Sigmoid colon (tissue), 7 donors: ENCODE measurements at regions of chr16 and their contacts with region 1.

Region 1: DNA sequence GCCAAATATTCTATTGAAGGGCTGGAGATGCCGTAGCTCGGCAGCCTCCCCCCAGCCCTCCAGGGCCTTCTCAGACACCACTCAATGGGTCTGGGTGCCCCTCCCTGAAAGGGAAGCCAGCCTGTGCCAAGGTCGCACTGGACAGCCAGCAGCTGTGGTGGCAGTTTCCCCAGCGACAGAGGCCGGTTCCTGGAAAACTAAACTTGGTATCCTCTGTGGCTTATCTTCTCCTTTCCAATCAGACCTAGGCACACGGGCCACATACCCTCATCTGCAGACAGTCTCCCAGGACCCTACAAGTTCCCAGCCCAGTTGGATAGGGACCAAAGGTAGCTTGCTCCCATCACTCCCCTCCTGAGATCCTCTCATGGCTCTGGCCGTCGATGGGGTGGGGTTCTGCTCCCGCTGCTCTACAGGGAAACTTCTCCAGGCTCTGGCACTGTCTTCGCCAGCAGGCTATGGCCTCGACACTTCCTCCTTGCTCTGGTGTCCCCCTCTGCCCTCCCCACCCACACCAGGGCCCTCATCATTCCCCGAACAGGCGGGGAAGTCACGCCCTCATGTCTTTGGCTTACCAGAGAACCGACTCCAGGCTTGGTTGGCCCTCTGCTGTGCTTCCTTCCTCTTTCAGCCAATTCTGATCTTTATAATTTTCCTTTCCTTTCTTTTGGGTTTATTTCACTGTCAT is 18.3 kb upstream of the IL21R start:
- DNase-seq: peak; percentile 71
- H3K4me3 ChIP-seq: no peak overlapping the region
- H3K27ac ChIP-seq: peak overlapping the region in 1 of 4 donors; percentile 8
- H3K4me1 ChIP-seq: no peaks in the 10 kb centered on the region
- H3K27me3 ChIP-seq: no peaks in the 10 kb centered on the region
- CTCF ChIP-seq: no peak
- EP300 ChIP-seq: no peak
- POLR2A ChIP-seq: no peak

Region 2: DNA sequence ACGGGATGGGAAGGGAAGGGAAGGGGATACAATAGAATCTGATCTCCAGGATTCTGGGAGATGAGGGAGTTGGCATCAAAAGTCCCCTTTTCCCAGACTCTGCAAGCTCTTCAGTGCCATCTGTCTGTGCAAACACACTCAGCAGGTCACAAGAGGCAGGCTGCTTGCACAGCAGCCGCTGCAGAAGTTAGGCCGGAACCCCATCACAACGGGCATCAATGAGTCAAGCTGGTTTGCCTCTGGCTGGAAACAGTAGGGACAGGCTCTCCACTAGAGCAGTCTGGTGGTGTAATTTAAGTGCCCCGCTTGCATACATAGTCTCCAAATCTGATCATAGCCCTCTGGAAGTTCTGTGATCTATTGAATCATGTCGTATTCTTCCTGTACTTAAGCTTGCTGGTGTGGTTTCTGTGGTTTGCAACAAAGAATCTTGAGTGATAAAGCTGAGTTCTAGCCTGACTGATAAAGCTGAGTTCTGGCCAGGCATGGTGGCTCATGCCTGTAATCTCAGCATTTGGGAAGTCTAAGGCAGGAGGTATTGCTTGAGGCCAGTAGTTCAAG is 214.1 kb before region 1 on chr16:
- intact Hi-C with region 1: no loop called
- DNase-seq: no peak
- H3K4me3 ChIP-seq: no peak overlapping the region
- H3K27ac ChIP-seq: no peak overlapping the region
- H3K4me1 ChIP-seq: no peaks in the 10 kb centered on the region
- H3K27me3 ChIP-seq: no peaks in the 10 kb centered on the region
- CTCF ChIP-seq: no peak
- EP300 ChIP-seq: no peak
- POLR2A ChIP-seq: no peak

Region 3: GRCh38 chr16:27449434-27450195 is 65.9 kb after region 1 on chr16:
- intact Hi-C with region 1: loop called (anchors 5 kb)
- DNase-seq: no peak
- H3K4me3 ChIP-seq: no peak overlapping the region
- H3K27ac ChIP-seq: no peak overlapping the region
- H3K4me1 ChIP-seq: no peaks in the 10 kb centered on the region
- H3K27me3 ChIP-seq: peaks cover 2 to 42% (median 23%) of the 10 kb centered on the region in 3 donors
- CTCF ChIP-seq: no peak
- EP300 ChIP-seq: no peak
- POLR2A ChIP-seq: no peak